Mammary epithelial cell (primary cell): ENCODE measurements at regions of chr22 and their contacts with region 1.

Region 1: GRCh38 chr22:46894081-46894671 is 131.7 kb downstream of the TBC1D22A start:
- DNase-seq: no peak
- H3K4me3 ChIP-seq: no peak overlapping the region
- H3K27ac ChIP-seq: no peak overlapping the region
- H3K4me1 ChIP-seq: no peaks in the 10 kb centered on the region
- H3K27me3 ChIP-seq: no peaks in the 10 kb centered on the region
- CTCF ChIP-seq: no peak

Region 2: DNA sequence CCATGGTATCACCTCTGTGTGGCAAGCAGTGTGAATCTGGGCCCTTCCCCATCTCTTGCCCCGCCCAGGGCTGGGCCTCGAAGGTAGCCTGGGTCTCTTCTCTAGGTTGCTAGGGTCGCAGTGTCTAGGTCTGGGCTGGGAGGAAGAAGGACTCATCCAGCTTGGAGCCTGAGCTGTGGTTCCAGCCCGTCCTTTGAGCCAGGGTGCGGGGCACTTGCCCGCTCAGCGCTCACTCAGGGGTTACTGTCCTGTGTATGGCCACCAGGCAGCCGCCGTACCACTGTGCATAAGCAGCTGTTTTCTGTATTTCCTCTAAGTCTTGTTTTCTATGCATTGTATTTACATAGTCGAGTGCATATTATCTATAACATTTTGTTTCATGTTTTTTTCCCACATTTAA is 29.2 kb after region 1 on chr22:
- CTCF ChIA-PET with region 1: no interaction called
- dilution Hi-C with region 1: no loop called
- in situ Hi-C with region 1: no loop called
- intact Hi-C with region 1: loop called (anchors 2 kb)
- DNase-seq: no peak
- H3K4me3 ChIP-seq: no peak overlapping the region
- H3K27ac ChIP-seq: no peak overlapping the region
- H3K4me1 ChIP-seq: no peaks in the 10 kb centered on the region
- H3K27me3 ChIP-seq: no peaks in the 10 kb centered on the region
- CTCF ChIP-seq: no peak

Region 3: DNA sequence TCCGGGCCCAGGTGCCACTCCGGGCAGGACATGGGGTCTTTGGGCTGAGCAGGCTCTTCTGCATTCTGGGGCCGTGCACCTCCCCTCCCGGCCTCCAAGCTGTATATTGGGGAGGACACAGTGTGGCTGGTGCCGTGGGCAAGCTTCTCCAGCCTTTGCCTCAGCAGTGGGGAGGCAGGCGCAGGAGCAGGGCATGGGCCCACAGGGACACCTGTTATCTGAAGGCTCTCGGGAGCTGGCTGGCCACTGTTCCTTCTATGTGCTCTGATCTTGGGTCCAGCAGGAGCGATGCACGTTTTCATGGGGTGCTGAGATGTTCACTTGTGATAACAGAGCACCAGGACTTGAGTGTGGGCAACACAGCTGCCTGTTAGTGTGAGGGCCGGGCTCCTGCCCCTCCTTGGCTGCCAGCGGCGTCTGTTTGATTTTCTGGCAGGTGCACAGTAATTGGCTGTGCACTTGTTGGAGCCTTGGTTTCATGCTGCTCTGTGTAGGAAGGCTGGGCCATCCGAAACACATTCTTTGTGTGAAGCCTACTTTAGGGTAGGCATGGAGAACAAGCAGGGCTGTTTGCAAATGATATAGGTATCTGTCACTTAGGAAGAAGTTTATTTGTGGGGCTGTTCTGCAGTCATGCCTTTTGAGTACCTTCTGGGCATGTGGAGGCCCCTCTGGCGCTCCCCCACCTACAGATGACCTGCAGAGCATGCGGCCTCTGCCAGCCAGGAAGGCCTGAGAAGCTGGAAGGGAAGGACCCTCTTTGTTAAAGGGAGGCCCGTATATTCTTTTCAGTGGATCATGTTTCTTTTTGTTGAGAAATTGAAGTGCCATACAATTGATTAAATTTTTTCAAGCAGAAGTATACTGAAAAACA is 69.7 kb after region 1 on chr22:
- CTCF ChIA-PET with region 1: no interaction called
- dilution Hi-C with region 1: no loop called
- in situ Hi-C with region 1: no loop called
- intact Hi-C with region 1: no loop called
- DNase-seq: no peak
- H3K4me3 ChIP-seq: no peak overlapping the region
- H3K27ac ChIP-seq: no peak overlapping the region
- H3K4me1 ChIP-seq: no peaks in the 10 kb centered on the region
- H3K27me3 ChIP-seq: no peaks in the 10 kb centered on the region
- CTCF ChIP-seq: no peak